Naive thymus-derived CD4-positive, alpha-beta T cell (primary cell): ENCODE measurements at regions of chr6 and their contacts with region 1.

Region 1: GRCh38 chr6:73969971-73970970 is 274.3 kb downstream of the CD109 start:
- DNase-seq: no peak
- ATAC-seq: no peak
- H3K4me3 ChIP-seq: no peak overlapping the region
- H3K4me3 Mint-ChIP-seq: no peak overlapping the region
- H3K27ac ChIP-seq: no peak overlapping the region
- H3K27ac Mint-ChIP-seq: no peak overlapping the region
- H3K4me1 ChIP-seq: no peaks in the 10 kb centered on the region
- H3K4me1 Mint-ChIP-seq: no peaks in the 10 kb centered on the region
- H3K27me3 ChIP-seq: no peaks in the 10 kb centered on the region
- H3K27me3 Mint-ChIP-seq: peaks cover 0 to 7% (median 0%) of the 10 kb centered on the region in 5 donors

Region 2: GRCh38 chr6:73747289-73747688 is 223.0 kb before region 1 on chr6:
- CTCF ChIA-PET with region 1: no interaction called
- POLR2A ChIA-PET with region 1: no interaction called
- intact Hi-C with region 1: loop called in 1 of 2 experiments (anchors 10 kb)
- DNase-seq: no peak
- ATAC-seq: peak; percentile 69
- H3K4me3 ChIP-seq: peak overlapping the region; percentile 17
- H3K4me3 Mint-ChIP-seq: no peak overlapping the region
- H3K27ac ChIP-seq: no peak overlapping the region
- H3K27ac Mint-ChIP-seq: no peak overlapping the region
- H3K4me1 ChIP-seq: no peaks in the 10 kb centered on the region
- H3K4me1 Mint-ChIP-seq: peaks cover 0 to 2% (median 0%) of the 10 kb centered on the region in 7 donors
- H3K27me3 ChIP-seq: no peaks in the 10 kb centered on the region
- H3K27me3 Mint-ChIP-seq: no peaks in the 10 kb centered on the region